A673 (cell line): ENCODE measurements at regions of chr7 and their contacts with region 1.

Region 1: DNA sequence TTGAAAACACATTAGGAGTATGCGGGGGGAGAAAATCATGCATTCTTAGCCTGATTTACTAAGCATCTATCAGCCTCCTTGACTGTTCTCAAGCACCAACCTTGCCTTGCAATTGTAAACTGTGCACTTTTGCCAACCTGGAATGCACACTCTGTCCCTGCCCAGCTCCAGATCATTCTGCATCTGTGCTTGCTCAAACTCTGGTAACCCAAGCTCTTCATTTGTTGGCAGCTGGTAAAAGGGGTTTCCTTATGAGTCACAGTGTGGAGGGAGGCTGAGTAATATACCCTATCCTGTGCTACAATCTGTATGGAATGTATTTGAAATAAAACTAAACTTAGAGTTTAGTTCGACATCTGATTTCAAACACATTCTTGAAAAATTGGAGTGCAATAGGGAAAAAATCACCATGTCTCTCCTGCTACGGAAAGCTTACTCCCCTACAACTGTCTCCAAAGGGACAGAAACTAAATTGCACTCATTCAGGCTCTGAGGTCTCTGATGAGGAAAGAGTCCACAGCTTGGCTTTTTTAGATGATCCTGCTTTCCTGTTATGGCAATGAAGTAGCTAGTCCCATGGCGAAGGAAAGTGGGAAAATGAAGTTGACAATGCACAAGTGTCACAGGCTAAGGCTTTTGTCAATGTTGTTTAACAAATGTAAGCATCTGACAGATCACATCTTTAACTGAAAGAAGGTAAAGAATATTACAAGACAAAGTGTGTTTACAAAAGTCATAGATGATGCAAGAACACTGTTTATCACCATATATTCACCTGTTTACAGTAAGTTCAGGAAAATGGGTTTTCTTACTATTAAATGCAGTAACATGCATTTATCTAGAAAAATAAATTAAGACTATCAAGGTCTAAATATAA is 61.9 kb downstream of the TES start:
- DNase-seq: peak; percentile 77
- H3K4me3 ChIP-seq: no peak overlapping the region
- H3K27ac ChIP-seq: peak overlapping the region; percentile 59
- H3K4me1 ChIP-seq: peaks cover 18% of the 10 kb centered on the region
- H3K27me3 ChIP-seq: no peaks in the 10 kb centered on the region
- CTCF ChIP-seq: no peak

Region 2: GRCh38 chr7:116087291-116087690 is 184.9 kb before region 1 on chr7:
- CTCF ChIA-PET with region 1: no interaction called
- POLR2A ChIA-PET with region 1: no interaction called
- intact Hi-C with region 1: no loop called
- DNase-seq: no peak
- H3K4me3 ChIP-seq: no peak overlapping the region
- H3K27ac ChIP-seq: no peak overlapping the region
- H3K4me1 ChIP-seq: no peaks in the 10 kb centered on the region
- H3K27me3 ChIP-seq: no peaks in the 10 kb centered on the region
- CTCF ChIP-seq: no peak

Region 3: GRCh38 chr7:116290740-116291139 is 18.5 kb after region 1 on chr7:
- CTCF ChIA-PET with region 1: no interaction called
- POLR2A ChIA-PET with region 1: interaction called, 11 read pairs
- intact Hi-C with region 1: no loop called
- DNase-seq: peak; percentile 40
- H3K4me3 ChIP-seq: no peak overlapping the region
- H3K27ac ChIP-seq: no peak overlapping the region
- H3K4me1 ChIP-seq: peaks cover 4% of the 10 kb centered on the region
- H3K27me3 ChIP-seq: no peaks in the 10 kb centered on the region
- CTCF ChIP-seq: 0 out of 2 replicates have a peak, but pooled peaks have one; percentile 22